GM23248 (cell line): ENCODE measurements at regions of chr12 and their contacts with region 1.

Region 1: DNA sequence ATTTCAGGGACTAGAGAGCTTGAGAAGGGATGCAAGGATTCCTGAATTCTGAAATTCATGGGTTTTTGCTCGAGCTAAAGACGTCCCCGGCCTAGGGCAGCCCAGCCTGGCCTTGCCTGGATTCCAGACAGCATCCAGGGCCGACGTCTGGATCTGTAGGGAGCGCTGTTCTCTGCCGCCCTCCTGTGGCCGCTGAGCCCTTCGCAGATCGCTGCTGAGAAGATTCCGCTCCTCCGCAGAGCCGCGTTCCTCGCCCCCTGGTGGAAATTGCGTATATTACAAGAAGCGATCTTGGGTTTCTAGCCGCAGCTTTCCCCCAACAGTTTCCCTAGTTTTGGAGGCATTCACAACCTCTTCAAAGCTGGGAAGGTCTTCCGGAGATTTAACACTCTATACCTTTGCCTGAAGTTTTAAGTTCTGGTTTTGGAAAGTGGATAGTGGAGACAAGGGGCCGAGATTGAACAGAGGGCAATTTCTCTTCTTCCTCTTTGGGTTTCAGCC is 5.1 kb downstream of the CISTR start:
- DNase-seq: peak; percentile 95
- H3K4me3 ChIP-seq: no peak overlapping the region
- H3K27ac ChIP-seq: no peak overlapping the region
- H3K4me1 ChIP-seq: no peaks in the 10 kb centered on the region; the same call in 1 of the 2 replicates
- H3K27me3 ChIP-seq: peaks cover 64% of the 10 kb centered on the region

Region 2: DNA sequence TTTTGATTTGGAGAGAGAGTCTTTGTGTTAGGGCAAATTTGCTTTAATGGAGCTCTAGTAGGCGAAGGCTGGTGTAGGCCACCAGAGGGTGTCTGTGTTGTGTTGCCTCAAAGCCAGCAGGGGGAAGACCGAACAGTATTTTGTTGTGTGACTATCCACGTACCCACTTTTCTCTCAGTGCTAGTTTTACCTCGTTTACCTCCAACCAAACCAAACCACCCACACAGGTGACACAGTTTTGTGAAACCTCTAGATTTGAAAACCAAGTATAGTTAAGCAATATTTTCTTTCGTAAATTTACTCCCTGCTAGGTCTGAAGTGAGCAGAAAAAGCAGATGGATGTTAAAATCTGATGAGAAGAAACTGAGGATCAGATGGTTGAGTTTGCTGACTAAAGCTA is 203.1 kb before region 1 on chr12:
- in situ Hi-C with region 1: loop called (anchors 10 kb)
- DNase-seq: peak; percentile 89
- H3K4me3 ChIP-seq: no peak overlapping the region
- H3K27ac ChIP-seq: peak overlapping the region; percentile 61
- H3K4me1 ChIP-seq: peaks cover 4% of the 10 kb centered on the region; the same call in 1 of the 2 replicates
- H3K27me3 ChIP-seq: no peaks in the 10 kb centered on the region

Region 3: DNA sequence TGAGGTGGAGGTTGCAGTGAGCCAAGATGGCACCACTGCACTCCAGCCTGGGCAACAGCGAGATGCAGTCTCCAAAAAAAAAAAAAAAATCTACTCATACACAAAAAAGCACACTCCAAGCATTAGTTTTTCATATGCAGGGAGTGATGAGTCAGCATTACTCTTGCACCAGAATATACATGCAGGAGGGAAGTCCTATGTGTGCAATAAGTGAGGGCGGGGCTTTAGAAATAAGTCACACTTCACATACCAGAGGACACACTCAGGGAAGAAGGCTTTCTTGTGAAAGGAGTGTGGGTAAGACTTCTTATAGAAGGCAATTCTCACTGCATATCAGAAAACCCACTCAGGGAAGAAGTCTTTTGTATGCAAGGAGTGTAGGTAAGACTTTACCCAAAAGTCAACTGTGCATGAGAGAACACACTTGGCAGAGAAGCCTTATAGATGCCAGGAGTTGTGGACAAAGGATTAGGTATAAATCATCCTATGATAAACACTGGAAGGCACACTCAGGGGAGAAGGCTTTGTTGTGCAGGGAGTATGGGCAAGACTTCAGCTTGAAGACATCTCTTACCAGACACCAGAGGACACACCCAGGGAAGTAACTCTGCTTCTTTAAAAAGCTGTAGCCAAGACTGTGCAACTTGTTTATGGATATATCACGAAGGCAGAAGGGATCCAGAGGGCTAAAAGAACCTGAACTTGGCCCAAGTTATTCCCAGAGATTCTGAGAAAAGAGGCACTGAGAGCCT is 171.0 kb before region 1 on chr12:
- in situ Hi-C with region 1: no loop called
- DNase-seq: peak; percentile 91
- H3K4me3 ChIP-seq: no peak overlapping the region
- H3K27ac ChIP-seq: peak overlapping the region; percentile 57
- H3K4me1 ChIP-seq: peaks cover 23% of the 10 kb centered on the region
- H3K27me3 ChIP-seq: no peaks in the 10 kb centered on the region

Region 4: DNA sequence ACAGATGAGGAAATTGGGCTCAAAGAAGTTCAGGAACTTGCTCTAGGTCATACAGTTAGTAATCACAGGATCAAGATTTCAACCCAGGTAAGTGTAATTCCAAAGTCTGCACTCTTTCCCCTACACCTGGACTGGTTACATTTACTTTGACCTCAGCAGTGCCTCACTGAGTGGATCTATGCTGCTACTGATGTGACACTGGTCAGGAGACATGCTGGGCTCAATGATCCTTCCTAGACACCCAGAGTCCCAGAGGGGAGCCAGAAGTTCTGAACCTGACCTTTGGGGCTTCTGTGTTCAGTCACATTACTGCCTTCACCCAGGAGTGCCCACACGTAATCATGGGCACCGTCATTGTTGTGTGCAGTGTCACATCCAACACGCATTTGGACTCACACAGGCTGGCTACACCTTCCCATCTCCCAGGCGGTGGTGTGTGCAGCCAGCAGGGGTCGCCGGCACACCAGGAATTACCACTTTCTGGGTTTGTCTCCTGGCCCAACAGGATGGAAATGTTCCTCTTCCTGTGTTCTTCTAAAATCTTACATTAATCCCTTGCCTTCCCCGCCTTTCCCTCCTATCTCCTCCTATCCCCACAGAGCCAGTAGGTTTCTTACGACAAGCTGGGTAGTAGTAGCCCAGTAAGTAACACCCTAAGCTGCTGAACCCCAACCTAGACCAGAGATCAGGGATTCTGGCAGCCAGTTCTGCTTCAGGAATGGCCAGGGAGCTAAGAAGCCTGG is 45.0 kb before region 1 on chr12:
- in situ Hi-C with region 1: loop called (anchors 5 kb)
- DNase-seq: peak; percentile 84
- H3K4me3 ChIP-seq: no peak overlapping the region
- H3K27ac ChIP-seq: no peak overlapping the region
- H3K4me1 ChIP-seq: peaks cover 4% of the 10 kb centered on the region
- H3K27me3 ChIP-seq: peaks cover 51% of the 10 kb centered on the region

Region 5: DNA sequence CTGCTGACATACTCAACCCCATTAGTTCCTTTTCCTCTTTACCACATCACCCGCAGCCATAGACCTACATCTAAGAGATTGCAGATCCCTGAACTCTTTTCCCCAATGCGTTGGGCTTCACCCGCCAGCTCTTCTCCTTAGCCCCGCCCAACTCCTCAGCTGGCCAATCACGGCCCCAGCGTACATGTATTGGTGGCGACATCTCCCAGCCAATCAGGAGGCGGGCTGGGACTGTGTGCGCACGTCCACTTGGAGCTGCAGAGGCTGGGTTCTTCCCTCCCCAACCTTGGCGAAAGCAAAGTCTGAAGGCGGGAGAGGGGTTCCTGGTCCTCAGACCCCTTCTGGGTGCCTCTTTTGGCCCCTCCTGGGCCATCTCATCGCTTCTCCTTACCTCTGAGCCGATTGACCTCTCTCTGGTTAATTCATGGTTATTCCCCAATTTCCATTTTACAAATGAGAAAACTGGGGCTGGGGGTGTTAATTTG is 813.8 kb after region 1 on chr12:
- in situ Hi-C with region 1: no loop called
- DNase-seq: peak; percentile 88
- H3K4me3 ChIP-seq: peak overlapping the region; percentile 64
- H3K27ac ChIP-seq: no peak overlapping the region
- H3K4me1 ChIP-seq: no peaks in the 10 kb centered on the region
- H3K27me3 ChIP-seq: peaks cover 9% of the 10 kb centered on the region